Activated T-helper 2 cell treated with anti-CD3 and anti-CD28 coated beads, Interferon-gamma antibody, Interleukin-2, Interleukin-4, amounts not matched to agents 10 μg/mL and 5 μg/mL and 100 μg/mL, durations not matched to agents 14 hours and 24 hours and 36 hours (primary cell): ENCODE measurements at regions of chr10 and their contacts with region 1.

Region 1: DNA sequence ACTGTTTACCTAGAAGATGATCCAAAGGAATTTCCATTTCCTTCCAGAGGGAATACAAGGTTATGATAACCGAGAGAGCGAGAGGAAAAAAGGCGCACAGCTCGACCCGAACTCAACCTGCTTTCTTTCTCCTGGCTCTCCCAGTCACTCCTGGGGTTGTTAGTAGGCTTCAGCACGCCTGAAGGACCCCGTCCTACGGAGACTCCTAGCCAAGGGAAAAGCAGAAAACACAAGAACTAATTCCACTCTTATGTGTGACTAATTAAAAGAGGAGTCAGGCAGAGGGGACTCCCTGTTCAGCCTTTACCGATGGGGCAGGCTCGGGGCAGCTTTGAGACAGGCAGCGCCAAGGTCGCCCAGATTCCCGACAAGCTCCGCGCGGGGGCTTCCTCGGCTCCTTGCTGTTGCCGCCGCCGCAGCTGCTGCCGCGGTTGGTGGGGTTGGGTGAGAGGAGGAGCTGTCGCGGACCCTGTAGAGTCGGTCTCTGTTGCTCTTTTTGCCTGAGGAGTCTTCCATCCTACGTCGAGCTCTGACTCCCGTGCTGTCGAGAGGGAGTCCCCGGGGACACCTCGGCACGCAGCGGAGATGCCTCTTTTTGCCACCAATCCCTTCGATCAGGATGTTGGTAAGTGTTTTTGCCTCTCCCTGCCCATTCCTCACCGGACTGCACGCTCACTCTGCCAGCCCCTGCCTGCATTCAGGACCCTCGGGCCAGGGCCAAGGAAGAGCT is at the start of gene STAM:
- DNase-seq: peak; percentile 87
- H3K4me3 Mint-ChIP-seq: peak within 1 kb of the TSS; percentile 98
- H3K27ac Mint-ChIP-seq: peak within 1 kb of the TSS; percentile 99
- H3K4me1 Mint-ChIP-seq: peaks cover 44% of the 10 kb centered on the region
- H3K27me3 Mint-ChIP-seq: no peaks in the 10 kb centered on the region
- total RNA-seq, gene STAM: 33.8 and 35.2 TPM in 2 replicates

Region 2: DNA sequence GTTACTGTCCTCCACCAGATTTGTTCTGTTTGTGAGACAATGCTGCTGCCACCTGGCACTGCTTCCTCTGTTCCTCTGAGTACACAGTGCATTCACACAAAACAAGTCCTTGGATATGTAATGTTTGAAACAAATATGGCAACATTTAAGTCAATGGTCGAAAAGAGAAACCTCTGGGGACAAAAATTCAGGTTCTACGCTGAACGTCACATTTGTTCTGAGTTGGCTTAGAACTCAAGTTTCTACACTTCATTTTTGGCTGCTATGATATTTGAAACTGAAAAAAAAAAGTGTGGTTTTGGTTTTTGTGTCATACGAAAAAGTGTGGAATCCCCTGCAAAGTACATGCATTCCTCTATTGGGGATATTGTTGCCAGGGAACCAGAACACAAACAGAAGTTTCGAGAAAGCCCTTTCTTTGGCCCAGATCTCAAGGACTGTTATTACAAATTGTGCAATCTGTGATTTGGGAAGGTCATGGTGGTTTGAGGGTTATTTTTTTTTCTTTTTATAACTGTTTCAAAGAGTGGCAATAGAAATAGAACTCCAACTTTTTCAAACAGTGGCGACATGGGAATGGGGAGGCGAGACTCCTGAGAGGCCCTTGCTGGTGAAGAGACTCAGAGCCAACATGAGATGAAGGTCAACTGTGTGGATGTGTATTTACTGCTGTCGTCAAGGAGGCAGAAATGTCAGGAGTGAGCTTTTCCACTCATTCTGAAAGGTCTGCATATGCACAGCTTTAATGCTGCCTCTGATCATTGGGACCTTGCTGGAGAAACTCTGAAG is 641.8 kb before region 1 on chr10:
- intact Hi-C with region 1: loop called (anchors 2 kb)
- DNase-seq: no peak
- H3K4me3 Mint-ChIP-seq: peak overlapping the region; percentile 46
- H3K27ac Mint-ChIP-seq: peak overlapping the region; percentile 99
- H3K4me1 Mint-ChIP-seq: peaks cover 33% of the 10 kb centered on the region
- H3K27me3 Mint-ChIP-seq: peaks cover 69% of the 10 kb centered on the region

Region 3: GRCh38 chr10:17655567-17656146 is 11.7 kb after region 1 on chr10:
- intact Hi-C with region 1: loop called (anchors 1 kb)
- DNase-seq: no peak
- H3K4me3 Mint-ChIP-seq: peak overlapping the region; percentile 11
- H3K27ac Mint-ChIP-seq: peak overlapping the region; percentile 70
- H3K4me1 Mint-ChIP-seq: peaks cover 55% of the 10 kb centered on the region
- H3K27me3 Mint-ChIP-seq: no peaks in the 10 kb centered on the region

Region 4: DNA sequence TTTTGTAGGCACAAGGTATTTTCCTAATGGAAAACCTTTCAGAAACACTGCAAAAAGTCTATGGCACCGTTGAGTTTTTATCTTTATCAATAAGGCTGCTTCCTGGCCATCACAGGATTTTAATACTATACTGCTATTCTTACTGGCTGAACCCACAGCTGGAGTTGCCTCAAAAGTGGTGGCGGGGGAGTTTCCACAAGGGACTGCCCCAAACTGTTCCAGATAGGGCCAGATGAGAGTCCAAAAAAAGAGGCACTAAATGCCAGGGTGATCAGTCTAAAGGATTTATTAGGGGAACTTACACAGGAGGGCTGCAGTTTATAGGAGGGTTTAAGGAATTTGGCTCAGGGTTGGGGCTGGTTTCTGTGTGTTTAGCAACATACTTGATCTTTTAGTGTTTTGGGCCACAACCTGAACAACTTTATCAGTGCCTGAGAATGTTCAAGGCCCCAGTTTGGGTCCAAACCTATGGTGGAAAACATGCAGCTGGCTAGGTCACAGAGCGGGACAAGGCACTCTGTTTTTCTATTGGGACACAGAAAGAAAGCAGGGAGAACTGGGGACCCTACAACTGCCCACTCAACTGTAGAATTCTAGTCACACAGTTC is 41.4 kb after region 1 on chr10:
- intact Hi-C with region 1: loop called (anchors 1 kb)
- DNase-seq: no peak
- H3K4me3 Mint-ChIP-seq: no peak overlapping the region
- H3K27ac Mint-ChIP-seq: peak overlapping the region; percentile 85
- H3K4me1 Mint-ChIP-seq: peaks cover 29% of the 10 kb centered on the region
- H3K27me3 Mint-ChIP-seq: no peaks in the 10 kb centered on the region